ENCODE measurements at regions of chrX and their contacts with region 1.

Region 1: GRCh38 chrX:155026726-155027508 is at the start of gene FUNDC2:
- DNase-seq: peak; percentile 92
- H3K4me3 Mint-ChIP-seq: peak within 1 kb of the TSS; percentile 86
- H3K27ac Mint-ChIP-seq: peak within 1 kb of the TSS; percentile 93
- H3K4me1 Mint-ChIP-seq: peaks cover 23% of the 10 kb centered on the region
- H3K27me3 Mint-ChIP-seq: no peaks in the 10 kb centered on the region
- total RNA-seq, gene FUNDC2: 94.3 to 95.5 TPM

Region 2: GRCh38 chrX:154762523-154763289 is 264.2 kb before region 1 on chrX and contains the start of gene DKC1:
- CTCF ChIA-PET with region 1: no interaction called
- intact Hi-C with region 1: loop called (anchors 2 kb)
- DNase-seq: peak; percentile 95
- H3K4me3 Mint-ChIP-seq: peak within 1 kb of the TSS; percentile 88
- H3K27ac Mint-ChIP-seq: peak within 1 kb of the TSS; percentile 94
- H3K4me1 Mint-ChIP-seq: peaks cover 33% of the 10 kb centered on the region
- H3K27me3 Mint-ChIP-seq: no peaks in the 10 kb centered on the region
- total RNA-seq, gene DKC1: 124 to 127 TPM

Region 3: DNA sequence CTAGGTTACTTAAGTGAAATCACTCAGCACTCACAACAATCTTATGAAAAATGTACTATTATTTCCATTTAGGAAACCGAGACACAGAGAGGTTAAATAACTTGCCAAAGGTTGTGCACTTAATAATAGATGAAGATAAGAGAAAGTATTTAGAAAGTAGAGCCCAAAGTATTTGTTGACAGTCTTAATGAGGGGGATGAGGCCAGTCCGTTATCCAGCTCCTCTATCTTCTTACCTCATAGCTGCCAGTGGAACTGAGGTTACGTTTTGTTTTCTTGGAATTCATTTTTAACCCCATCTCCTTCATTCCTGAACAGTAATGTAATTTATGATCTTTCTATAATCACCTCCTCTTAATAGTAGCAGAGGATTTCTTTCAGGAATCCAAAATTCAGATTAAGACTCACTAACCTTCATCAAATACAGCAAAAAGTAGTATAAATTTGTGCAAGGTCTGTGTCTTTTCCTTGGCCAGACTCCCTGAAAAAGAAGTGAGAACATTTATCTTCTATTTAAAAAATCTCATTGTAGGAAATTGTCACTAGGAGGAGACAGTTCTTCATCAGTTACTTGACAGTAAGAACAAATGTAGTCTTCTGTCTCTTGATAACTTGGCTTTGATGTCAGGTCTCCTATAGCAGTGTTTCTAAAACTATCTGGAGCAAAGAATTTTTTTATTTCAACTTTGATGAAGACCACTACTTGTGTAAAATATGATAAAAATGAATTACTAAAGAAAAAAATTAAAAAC is 39.9 kb before region 1 on chrX:
- CTCF ChIA-PET with region 1: no interaction called
- intact Hi-C with region 1: loop called (anchors 2 kb)
- DNase-seq: no peak
- H3K4me3 Mint-ChIP-seq: no peak overlapping the region
- H3K27ac Mint-ChIP-seq: no peak overlapping the region
- H3K4me1 Mint-ChIP-seq: peaks cover 19% of the 10 kb centered on the region
- H3K27me3 Mint-ChIP-seq: no peaks in the 10 kb centered on the region

Region 4: GRCh38 chrX:155056877-155057792 is 30.2 kb after region 1 on chrX:
- CTCF ChIA-PET with region 1: interaction called, 3 read pairs
- intact Hi-C with region 1: loop called (anchors 2 kb)
- DNase-seq: peak; percentile 57
- H3K4me3 Mint-ChIP-seq: peak overlapping the region; percentile 48
- H3K27ac Mint-ChIP-seq: peak overlapping the region; percentile 53
- H3K4me1 Mint-ChIP-seq: peaks cover 29% of the 10 kb centered on the region
- H3K27me3 Mint-ChIP-seq: no peaks in the 10 kb centered on the region

Region 5: GRCh38 chrX:155112171-155112570 is 85.3 kb after region 1 on chrX:
- CTCF ChIA-PET with region 1: no interaction called
- intact Hi-C with region 1: loop called (anchors 1 kb)
- DNase-seq: no peak
- H3K4me3 Mint-ChIP-seq: no peak overlapping the region
- H3K27ac Mint-ChIP-seq: no peak overlapping the region
- H3K4me1 Mint-ChIP-seq: peaks cover 15% of the 10 kb centered on the region
- H3K27me3 Mint-ChIP-seq: no peaks in the 10 kb centered on the region

Region 6: DNA sequence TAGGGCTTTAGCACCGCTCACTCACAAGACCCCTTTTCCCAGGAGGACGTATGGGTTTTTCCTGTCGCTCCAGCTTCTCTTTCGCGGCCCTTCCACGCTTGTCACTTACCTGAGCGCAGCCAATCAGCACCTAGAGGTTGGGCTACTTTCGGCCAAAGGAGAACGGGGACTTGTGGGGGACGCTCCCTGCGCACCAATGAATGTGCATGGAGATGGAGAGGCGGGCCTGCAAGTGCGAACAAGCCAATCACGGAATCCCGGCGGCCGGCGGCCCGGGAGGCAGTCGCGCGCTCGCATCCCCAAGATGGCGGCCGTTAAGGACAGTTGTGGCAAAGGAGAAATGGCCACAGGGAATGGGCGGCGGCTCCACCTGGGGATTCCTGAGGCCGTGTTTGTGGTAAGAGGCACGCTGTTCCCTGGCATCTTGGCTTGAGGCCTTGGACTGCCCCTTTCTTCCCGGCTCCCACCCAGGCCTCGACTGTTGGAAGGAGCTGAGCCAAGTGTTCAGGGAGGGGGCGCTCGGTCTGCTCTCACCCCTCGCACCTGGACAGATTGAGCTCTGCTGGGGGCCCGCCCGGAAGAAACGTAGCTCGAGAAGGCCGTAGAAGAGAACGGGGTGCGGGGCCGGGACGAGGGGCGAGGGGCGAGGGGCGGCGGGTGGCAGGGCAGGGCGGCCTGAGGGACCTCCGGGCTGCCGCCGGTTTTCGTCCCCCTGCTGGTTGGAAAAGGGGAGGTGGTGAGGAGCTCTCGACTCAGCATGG is 189.4 kb after region 1 on chrX and contains the start of gene VBP1:
- CTCF ChIA-PET with region 1: no interaction called
- intact Hi-C with region 1: loop called (anchors 1 kb)
- DNase-seq: peak; percentile 93
- H3K4me3 Mint-ChIP-seq: peak within 1 kb of the TSS; percentile 96
- H3K27ac Mint-ChIP-seq: peak within 1 kb of the TSS; percentile 88
- H3K4me1 Mint-ChIP-seq: peaks cover 15% of the 10 kb centered on the region
- H3K27me3 Mint-ChIP-seq: no peaks in the 10 kb centered on the region
- total RNA-seq, gene VBP1: 106 to 110 TPM